Activated B cell treated with CpG ODN at 0.5 μM for 24 hours (primary cell): ENCODE measurements at regions of chr1 and their contacts with region 1.

Region 1: GRCh38 chr1:180154325-180155181 is at the start of gene QSOX1:
- DNase-seq: peak; percentile 79
- ATAC-seq: peak; percentile 97
- H3K4me3 Mint-ChIP-seq: peak within 1 kb of the TSS; percentile 96
- H3K27ac Mint-ChIP-seq: peak within 1 kb of the TSS; percentile 83
- H3K4me1 Mint-ChIP-seq: peaks cover 23% of the 10 kb centered on the region
- H3K27me3 Mint-ChIP-seq: no peaks in the 10 kb centered on the region
- CTCF ChIP-seq: no peak
- total RNA-seq, gene QSOX1: 11.9 and 12.9 TPM in 2 replicates

Region 2: DNA sequence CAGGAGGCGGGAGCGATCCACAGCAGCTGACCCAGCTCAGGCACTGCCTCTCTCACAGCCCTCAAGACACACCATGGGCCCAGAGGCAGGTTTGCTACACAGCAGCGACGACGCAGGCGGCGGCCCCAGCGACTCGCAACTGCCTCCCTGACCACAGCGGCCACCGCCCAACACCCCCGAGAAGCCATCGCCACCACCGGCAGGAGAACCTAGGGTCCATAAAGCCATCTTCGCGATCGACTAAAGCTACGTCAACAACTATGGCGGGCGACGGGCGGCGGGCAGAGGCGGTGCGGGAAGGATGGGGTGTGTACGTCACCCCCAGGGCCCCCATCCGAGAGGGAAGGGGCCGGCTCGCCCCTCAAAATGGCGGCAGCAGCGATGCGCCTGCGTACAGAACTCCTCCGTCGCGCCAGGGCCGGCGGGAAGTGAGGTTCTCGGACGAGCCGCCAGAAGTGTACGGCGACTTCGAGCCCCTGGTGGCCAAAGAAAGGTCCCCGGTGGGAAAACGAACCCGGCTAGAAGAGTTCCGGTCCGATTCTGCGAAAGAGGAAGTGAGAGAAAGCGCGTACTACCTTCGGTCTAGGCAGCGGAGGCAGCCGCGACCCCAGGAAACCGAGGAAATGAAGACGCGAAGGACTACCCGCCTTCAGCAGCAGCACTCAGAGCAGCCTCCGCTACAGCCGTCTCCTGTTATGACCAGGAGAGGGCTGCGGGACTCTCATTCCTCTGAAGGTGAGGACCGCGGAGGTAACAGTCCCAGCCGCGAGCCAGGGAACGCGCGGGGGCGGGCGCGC is 272.1 kb before region 1 on chr1 and contains the start of gene TOR1AIP1:
- CTCF ChIA-PET with region 1: no interaction called
- POLR2A ChIA-PET with region 1: interaction called, 8 read pairs
- intact Hi-C with region 1: loop called (anchors 1 kb)
- DNase-seq: peak; percentile 96
- ATAC-seq: peak; percentile 76
- H3K4me3 Mint-ChIP-seq: peak within 1 kb of the TSS; percentile 100
- H3K27ac Mint-ChIP-seq: peak within 1 kb of the TSS; percentile 100
- H3K4me1 Mint-ChIP-seq: peaks cover 64% of the 10 kb centered on the region
- H3K27me3 Mint-ChIP-seq: no peaks in the 10 kb centered on the region
- CTCF ChIP-seq: no peak
- total RNA-seq, gene TOR1AIP1: 42.3 and 46.6 TPM in 2 replicates

Region 3: DNA sequence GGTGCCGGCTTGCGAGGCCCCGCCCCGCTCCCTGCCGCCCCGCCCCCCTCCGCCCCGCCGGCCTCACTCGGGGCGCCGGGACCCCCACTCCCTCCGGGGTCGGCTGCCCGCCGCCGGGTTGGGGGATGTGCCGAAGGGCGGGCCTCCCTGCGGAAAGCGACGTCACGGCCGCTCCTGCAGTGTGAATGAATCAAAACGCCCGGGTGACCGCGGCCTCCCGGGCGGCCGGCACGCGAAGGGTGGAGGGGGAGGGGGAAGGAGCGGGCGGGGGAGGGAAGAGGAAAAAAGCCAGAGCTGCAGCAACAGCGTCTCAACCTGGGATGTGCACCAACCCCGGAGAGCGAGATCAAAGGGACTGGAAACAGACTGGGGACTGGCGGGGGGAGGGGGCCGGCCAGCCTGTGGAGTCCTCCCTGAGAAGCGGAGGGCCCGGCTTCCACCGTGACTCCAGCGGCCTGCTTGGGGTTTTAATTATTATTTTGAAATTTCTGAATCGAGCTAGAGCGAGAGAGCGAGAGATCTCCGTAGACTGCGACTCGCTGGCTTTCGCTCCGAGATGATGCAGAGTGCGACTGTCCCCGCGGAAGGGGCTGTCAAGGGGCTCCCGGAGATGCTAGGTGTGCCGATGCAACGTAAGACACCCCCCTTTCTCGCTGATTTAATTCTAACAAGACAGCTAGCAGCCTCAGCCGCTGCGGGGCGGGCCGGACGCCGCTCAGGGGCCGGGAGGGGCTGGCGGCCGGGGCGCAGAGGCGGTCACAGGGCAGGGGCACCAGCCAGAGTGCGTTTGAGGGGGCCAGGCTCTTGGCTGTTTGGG is 75.6 kb after region 1 on chr1 and contains the start of gene LHX4:
- CTCF ChIA-PET with region 1: no interaction called
- POLR2A ChIA-PET with region 1: no interaction called
- intact Hi-C with region 1: loop called (anchors 2 kb)
- DNase-seq: peak; percentile 26
- ATAC-seq: no peak
- H3K4me3 Mint-ChIP-seq: peak within 1 kb of the TSS; percentile 78
- H3K27ac Mint-ChIP-seq: no peak within 1 kb of the TSS
- H3K4me1 Mint-ChIP-seq: peaks cover 37% of the 10 kb centered on the region
- H3K27me3 Mint-ChIP-seq: peaks cover 50% of the 10 kb centered on the region
- CTCF ChIP-seq: no peak
- total RNA-seq, gene LHX4: not detected in 2 replicates

Region 4: GRCh38 chr1:182029379-182030331 is 1875.1 kb after region 1 on chr1:
- CTCF ChIA-PET with region 1: no interaction called
- POLR2A ChIA-PET with region 1: no interaction called
- intact Hi-C with region 1: loop called (anchors 10 kb)
- DNase-seq: peak; percentile 98
- ATAC-seq: peak; percentile 94
- H3K4me3 Mint-ChIP-seq: peak overlapping the region; percentile 97
- H3K27ac Mint-ChIP-seq: peak overlapping the region; percentile 97
- H3K4me1 Mint-ChIP-seq: peaks cover 15% of the 10 kb centered on the region
- H3K27me3 Mint-ChIP-seq: no peaks in the 10 kb centered on the region
- CTCF ChIP-seq: no peak